A549 (cell line): ENCODE measurements at regions of chr1 and their contacts with region 1.

Region 1: DNA sequence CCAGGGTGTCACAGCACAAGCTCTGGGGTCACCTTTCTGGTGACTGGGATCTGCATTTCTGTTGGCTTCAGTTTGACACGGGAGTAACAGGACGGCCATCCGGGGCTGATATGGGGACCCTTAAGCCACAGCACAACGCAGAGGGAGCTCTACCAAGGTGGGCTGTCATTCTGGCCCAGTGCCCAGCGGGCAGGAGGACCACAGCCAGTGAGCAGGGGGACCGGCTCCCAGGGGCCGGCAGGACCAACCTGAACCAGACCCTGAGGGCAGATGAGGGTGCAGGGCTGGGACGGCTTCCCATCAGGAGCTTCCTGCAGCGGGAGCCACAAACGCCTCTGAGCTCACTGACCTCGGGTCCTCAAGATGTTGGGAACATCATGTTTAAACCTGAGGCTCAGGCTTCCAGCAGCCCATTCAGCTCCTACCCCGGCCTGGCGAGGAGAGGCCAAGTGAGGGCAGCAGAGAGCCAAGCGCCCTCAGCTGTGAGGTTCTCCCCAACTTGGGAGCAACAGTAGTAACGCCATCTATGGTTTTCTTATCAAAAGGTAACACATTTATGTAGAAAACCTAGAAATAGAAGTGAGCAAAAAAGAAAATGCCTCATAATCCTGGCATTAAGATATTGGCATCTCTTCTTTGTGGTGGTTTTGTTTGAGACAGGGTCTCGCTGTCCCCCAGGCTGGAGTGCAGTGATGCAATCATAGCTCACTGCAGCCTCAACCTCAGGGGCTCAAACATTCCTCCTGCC is 26.8 kb downstream of the TMEM201 start:
- DNase-seq: peak; percentile 47 to 65
- ATAC-seq: peak; percentile 91 to 93
- H3K4me3 ChIP-seq: no peak overlapping the region
- H3K27ac ChIP-seq: no peak overlapping the region
- H3K4me1 ChIP-seq: no peaks in the 10 kb centered on the region
- CTCF ChIP-seq: peak; percentile 53
- EP300 ChIP-seq: no peak
- POLR2A ChIP-seq: no peak
- RAD21 ChIP-seq: peak; percentile 34 to 53; a peak in 4 of 5 replicates

Region 2: DNA sequence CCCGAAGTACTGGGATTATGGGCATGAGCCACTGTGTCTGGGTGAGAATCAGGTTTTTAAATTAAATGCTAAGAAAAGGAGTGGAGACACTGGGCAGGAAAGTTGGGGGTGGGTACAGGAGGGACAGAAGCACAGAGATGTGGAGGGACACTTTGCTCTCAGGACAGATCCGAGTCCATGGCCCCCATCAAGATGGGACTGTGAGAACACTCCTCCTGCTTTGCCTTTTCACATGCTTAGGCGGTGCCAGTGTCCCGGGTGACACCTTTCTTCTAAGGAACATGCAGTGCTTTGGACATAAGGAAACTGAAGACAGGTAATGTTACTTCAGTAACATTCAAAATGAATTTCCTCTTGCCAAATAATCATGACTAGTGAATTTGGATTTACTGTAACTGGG is 59.5 kb before region 1 on chr1:
- CTCF ChIA-PET with region 1: no interaction called
- POLR2A ChIA-PET with region 1: no interaction called
- DNase-seq: no peak
- ATAC-seq: no peak
- H3K4me3 ChIP-seq: no peak overlapping the region
- H3K27ac ChIP-seq: no peak overlapping the region
- H3K4me1 ChIP-seq: peaks cover 11% of the 10 kb centered on the region; the same call in 2 of the 3 replicates
- CTCF ChIP-seq: no peak
- EP300 ChIP-seq: no peak
- POLR2A ChIP-seq: no peak
- RAD21 ChIP-seq: no peak

Region 3: GRCh38 chr1:9588551-9589143 is 26.8 kb before region 1 on chr1 and contains the start of gene TMEM201:
- CTCF ChIA-PET with region 1: interaction called, 11 read pairs
- POLR2A ChIA-PET with region 1: no interaction called
- DNase-seq: peak; percentile 66 to 84
- ATAC-seq: peak; percentile 82 to 87
- H3K4me3 ChIP-seq: peak within 1 kb of the TSS; percentile 83
- H3K27ac ChIP-seq: peak within 1 kb of the TSS; percentile 80 to 95
- H3K4me1 ChIP-seq: peaks cover 9% of the 10 kb centered on the region; the same call in 2 of the 3 replicates
- CTCF ChIP-seq: peak; percentile 77
- EP300 ChIP-seq: no peak
- POLR2A ChIP-seq: peak; percentile 29; the same call in 1 of the 2 replicates
- RAD21 ChIP-seq: peak in 1 of 2 experiments; percentile 38; a peak in 3 of 5 replicates
- polyA plus RNA-seq, gene TMEM201: 1.9 and 2.1 TPM in 2 replicates

Region 4: DNA sequence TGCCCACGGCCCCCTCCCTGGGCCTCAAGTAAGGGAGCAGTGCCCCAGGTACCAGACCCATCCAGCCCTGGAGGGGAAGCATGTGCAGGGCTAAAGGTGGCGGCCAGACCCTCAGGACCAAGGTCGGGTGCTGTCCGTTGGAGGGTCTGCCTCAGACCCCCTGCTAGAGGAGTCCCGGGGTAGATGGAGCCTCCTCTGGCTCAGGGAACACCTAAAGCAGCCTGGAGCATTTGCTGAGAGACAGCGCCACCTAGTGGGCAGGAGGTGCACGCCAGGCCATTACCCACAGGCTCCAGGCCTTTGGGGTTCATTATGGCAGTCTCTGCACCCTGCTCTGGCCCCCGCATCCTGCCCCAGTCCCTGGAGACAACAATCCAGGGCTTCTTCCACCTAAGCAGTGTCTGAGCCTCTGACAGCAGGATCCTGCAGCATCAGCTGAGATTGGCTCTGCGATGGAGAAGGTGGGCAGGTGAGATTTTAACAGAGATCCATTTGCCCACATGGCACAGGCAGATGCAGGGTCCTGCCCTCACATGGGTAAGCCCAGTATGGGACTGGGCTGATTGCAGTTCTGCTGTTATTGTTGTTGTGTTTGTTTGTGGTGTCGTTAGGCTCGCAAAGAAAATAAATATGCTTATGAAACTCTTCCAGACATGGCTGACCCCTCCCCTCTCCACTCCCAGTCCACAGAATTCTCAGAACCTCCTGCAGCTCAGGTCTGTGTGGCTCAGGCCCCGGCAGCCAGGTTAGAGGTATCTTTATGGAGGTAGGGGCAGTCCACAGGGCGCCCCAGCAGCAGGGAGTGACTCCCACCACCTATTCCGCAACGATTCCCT is 252.1 kb after region 1 on chr1:
- CTCF ChIA-PET with region 1: interaction called, 11 read pairs
- POLR2A ChIA-PET with region 1: no interaction called
- DNase-seq: peak; percentile 57 to 72
- ATAC-seq: peak; percentile 92 to 97
- H3K4me3 ChIP-seq: no peak overlapping the region
- H3K27ac ChIP-seq: 0 out of 6 replicates have a peak overlapping the region, but pooled peaks of 1 of the 2 experiments have one; percentile 32
- H3K4me1 ChIP-seq: no peaks in the 10 kb centered on the region
- CTCF ChIP-seq: peak; percentile 81
- EP300 ChIP-seq: no peak
- POLR2A ChIP-seq: no peak
- RAD21 ChIP-seq: peak; percentile 94 to 97